Activated T-helper 2 cell treated with anti-CD3 and anti-CD28 coated beads, Interferon-gamma antibody, Interleukin-2, Interleukin-4, amounts not matched to agents 10 μg/mL and 5 μg/mL and 100 μg/mL, durations not matched to agents 14 hours and 24 hours and 36 hours (primary cell): ENCODE measurements at regions of chr11 and their contacts with region 1.

Region 1: DNA sequence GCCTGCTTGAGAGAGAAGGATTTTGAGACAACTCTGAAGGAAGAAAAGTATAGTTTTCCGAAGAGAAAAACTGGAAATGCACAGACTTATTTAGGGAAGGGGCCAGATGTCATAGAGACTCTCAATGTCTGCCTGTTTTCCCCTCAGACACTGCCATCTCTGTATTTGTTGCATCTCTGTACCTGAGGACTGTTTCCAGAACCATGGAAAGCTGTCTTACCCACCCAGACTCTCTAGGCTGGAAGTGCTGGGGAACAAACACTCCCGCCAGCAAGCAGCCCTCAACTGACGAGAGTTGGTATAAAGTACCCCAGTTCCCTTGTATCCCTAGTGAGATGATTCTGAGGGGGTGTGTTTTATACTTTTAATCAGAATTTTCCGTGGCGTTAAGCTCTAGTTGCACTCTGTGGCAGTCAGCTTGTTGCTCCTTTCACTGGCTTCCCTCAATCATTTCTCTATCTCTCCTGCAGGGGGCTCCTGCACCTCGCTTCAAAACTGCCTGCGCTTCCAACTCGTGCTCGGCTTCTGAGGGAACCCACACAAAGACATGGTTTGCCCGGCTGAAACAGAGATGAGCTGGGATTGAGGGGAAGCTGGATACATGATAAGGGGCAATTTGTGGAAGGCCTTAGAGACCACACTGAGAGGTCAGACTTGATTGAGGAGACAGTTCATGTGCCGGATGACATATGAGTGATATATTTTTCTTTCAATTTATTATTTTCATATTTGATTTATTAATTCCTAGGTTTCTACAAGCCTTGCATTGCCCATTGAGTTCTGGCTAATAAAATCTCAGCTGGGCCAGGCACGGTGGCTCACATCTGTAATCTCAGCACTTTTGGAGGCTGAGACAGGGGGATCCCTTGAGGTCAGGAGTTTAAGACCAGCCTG is 36.9 kb upstream of the CLPB start:
- DNase-seq: peak; percentile 50
- H3K4me3 Mint-ChIP-seq: no peak overlapping the region
- H3K27ac Mint-ChIP-seq: no peak overlapping the region
- H3K4me1 Mint-ChIP-seq: peaks cover 3% of the 10 kb centered on the region
- H3K27me3 Mint-ChIP-seq: peaks cover 45% of the 10 kb centered on the region

Region 2: GRCh38 chr11:72278911-72279310 is 192.3 kb before region 1 on chr11:
- intact Hi-C with region 1: no loop called
- DNase-seq: no peak
- H3K4me3 Mint-ChIP-seq: no peak overlapping the region
- H3K27ac Mint-ChIP-seq: no peak overlapping the region
- H3K4me1 Mint-ChIP-seq: no peaks in the 10 kb centered on the region
- H3K27me3 Mint-ChIP-seq: peaks cover 36% of the 10 kb centered on the region

Region 3: DNA sequence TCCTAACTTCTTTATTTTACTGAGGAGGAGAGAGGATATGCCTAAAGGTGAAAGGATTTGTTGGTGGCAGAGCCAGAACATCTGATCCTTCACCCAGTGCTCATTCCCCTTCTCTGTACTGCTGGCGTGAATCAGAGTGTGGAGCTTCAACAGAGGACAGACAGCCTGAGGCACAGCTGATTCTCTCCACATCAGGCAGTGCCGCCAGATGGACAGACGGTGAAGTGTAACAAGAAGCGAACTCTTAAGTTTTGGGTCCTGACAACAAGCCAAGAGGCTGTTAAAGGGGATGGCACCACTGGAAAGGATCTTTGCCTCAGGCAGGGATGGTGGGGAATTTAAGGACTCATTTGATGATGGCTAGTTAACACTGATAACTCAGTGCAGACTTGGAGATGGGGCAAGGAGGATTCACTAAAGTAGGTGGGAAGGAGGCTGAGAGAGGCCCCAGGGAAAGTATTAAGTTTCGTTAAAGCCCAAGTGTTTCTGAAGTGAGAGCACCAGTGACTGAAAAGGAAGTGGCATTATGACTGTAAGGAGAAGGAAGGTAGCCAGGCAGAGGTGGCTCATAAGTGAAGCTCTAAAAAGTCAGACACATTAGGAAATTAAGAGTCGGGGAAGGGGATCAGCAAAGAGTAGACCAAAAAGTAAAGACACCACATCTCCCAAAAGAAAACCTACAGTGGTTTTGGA is 118.2 kb before region 1 on chr11:
- intact Hi-C with region 1: no loop called
- DNase-seq: no peak
- H3K4me3 Mint-ChIP-seq: no peak overlapping the region
- H3K27ac Mint-ChIP-seq: no peak overlapping the region
- H3K4me1 Mint-ChIP-seq: no peaks in the 10 kb centered on the region
- H3K27me3 Mint-ChIP-seq: no peaks in the 10 kb centered on the region

Region 4: GRCh38 chr11:72483412-72484186 is 12.3 kb after region 1 on chr11:
- intact Hi-C with region 1: no loop called
- DNase-seq: no peak
- H3K4me3 Mint-ChIP-seq: no peak overlapping the region
- H3K27ac Mint-ChIP-seq: peak overlapping the region; percentile 7
- H3K4me1 Mint-ChIP-seq: peaks cover 13% of the 10 kb centered on the region
- H3K27me3 Mint-ChIP-seq: peaks cover 13% of the 10 kb centered on the region

Region 5: GRCh38 chr11:72511393-72512047 is 40.3 kb after region 1 on chr11:
- intact Hi-C with region 1: no loop called
- DNase-seq: no peak
- H3K4me3 Mint-ChIP-seq: no peak overlapping the region
- H3K27ac Mint-ChIP-seq: no peak overlapping the region
- H3K4me1 Mint-ChIP-seq: no peaks in the 10 kb centered on the region
- H3K27me3 Mint-ChIP-seq: peaks cover 13% of the 10 kb centered on the region

Region 6: GRCh38 chr11:72573072-72573854 is 102.0 kb after region 1 on chr11:
- intact Hi-C with region 1: loop called (anchors 1 kb)
- DNase-seq: no peak
- H3K4me3 Mint-ChIP-seq: no peak overlapping the region
- H3K27ac Mint-ChIP-seq: no peak overlapping the region
- H3K4me1 Mint-ChIP-seq: peaks cover 8% of the 10 kb centered on the region
- H3K27me3 Mint-ChIP-seq: peaks cover 10% of the 10 kb centered on the region

Region 7: DNA sequence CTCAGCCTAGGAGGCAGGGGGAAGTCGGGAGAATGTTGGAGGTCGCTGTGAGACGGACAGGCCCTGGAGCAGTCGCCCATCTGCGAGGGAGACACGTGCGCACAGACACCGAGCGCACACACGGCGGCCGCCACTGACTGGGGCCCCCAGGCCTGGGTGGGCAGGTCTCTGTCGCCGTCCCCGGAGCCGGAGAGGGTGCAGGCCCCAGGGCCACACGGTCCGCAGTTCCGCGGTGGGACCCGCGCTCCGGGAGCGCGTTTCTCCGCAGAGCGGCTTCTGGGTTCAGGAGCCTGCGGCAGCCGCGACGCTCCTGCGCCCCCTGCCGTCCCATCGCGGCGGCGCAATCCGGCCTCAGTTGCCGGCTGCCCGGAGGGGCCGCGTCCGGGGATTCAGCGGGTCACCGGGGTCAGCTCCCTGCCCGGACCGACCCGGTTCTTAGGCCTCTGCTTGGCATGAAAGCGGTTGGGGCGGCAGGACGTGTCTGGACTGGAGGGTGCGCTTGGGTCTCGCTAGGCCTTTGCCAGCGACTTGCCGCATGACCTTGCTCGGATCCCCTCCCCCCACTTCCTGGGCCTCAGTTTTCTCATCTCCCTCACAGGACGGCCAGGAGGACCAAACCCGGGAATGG is 171.7 kb after region 1 on chr11:
- intact Hi-C with region 1: loop called (anchors 1 kb)
- DNase-seq: peak; percentile 59
- H3K4me3 Mint-ChIP-seq: no peak overlapping the region
- H3K27ac Mint-ChIP-seq: no peak overlapping the region
- H3K4me1 Mint-ChIP-seq: no peaks in the 10 kb centered on the region
- H3K27me3 Mint-ChIP-seq: peaks cover 5% of the 10 kb centered on the region

Region 8: DNA sequence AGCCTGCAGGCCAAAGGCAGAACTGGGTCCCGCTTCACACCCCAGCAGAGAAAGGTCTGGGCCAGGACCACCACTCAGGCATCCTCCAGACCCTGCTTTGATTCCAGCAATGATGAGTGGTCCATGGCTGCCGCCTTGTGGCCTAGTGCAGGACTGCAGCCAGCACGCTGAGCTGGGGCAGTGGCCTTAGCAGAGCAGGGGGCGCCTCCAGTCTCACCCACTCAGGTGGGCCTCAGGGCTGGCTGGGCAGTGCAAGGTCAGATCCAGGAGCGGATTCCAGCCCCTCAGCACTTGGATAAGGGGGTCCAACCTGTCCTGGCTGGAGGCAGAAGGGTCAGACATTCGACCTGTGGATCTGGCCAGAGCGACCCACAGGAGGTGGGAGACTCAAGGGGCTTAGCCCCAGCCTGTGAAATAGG is 212.5 kb after region 1 on chr11:
- intact Hi-C with region 1: loop called (anchors 5 kb)
- DNase-seq: peak; percentile 63
- H3K4me3 Mint-ChIP-seq: no peak overlapping the region
- H3K27ac Mint-ChIP-seq: no peak overlapping the region
- H3K4me1 Mint-ChIP-seq: peaks cover 22% of the 10 kb centered on the region
- H3K27me3 Mint-ChIP-seq: peaks cover 6% of the 10 kb centered on the region